Activated T-helper 2 cell treated with anti-CD3 and anti-CD28 coated beads, Interferon-gamma antibody, Interleukin-2, Interleukin-4, amounts not matched to agents 10 μg/mL and 5 μg/mL and 100 μg/mL, durations not matched to agents 14 hours and 24 hours and 36 hours (primary cell): ENCODE measurements at regions of chr5 and their contacts with region 1.

Region 1: GRCh38 chr5:34464830-34465229 is 191.3 kb upstream of the RAI14 start:
- DNase-seq: no peak
- H3K4me3 Mint-ChIP-seq: no peak overlapping the region
- H3K27ac Mint-ChIP-seq: no peak overlapping the region
- H3K4me1 Mint-ChIP-seq: peaks cover 28% of the 10 kb centered on the region
- H3K27me3 Mint-ChIP-seq: peaks cover 4% of the 10 kb centered on the region

Region 2: GRCh38 chr5:33997331-33997983 is 467.4 kb before region 1 on chr5:
- intact Hi-C with region 1: loop called (anchors 2 kb)
- DNase-seq: no peak
- H3K4me3 Mint-ChIP-seq: no peak overlapping the region
- H3K27ac Mint-ChIP-seq: no peak overlapping the region
- H3K4me1 Mint-ChIP-seq: peaks cover 31% of the 10 kb centered on the region
- H3K27me3 Mint-ChIP-seq: no peaks in the 10 kb centered on the region